CD14-positive monocyte (primary cell): ENCODE measurements at regions of chr3 and their contacts with region 1.

Region 1: GRCh38 chr3:183188895-183189462 is 26.4 kb upstream of the LAMP3 start:
- DNase-seq: peak; percentile 36 to 47 (median 44)
- H3K4me3 ChIP-seq: no peak overlapping the region
- H3K4me3 Mint-ChIP-seq: no peak overlapping the region
- H3K27ac ChIP-seq: no peak overlapping the region
- H3K27ac Mint-ChIP-seq: peak overlapping the region in 2 of 7 donors; percentile 50 to 75
- H3K4me1 ChIP-seq: peaks cover 20 to 26% of the 10 kb centered on the region in 2 donors
- H3K4me1 Mint-ChIP-seq: peaks cover 21% of the 10 kb centered on the region
- H3K27me3 ChIP-seq: no peaks in the 10 kb centered on the region
- H3K27me3 Mint-ChIP-seq: peaks cover 0 to 6% (median 0%) of the 10 kb centered on the region in 3 donors
- CTCF ChIP-seq: peak; percentile 39

Region 2: DNA sequence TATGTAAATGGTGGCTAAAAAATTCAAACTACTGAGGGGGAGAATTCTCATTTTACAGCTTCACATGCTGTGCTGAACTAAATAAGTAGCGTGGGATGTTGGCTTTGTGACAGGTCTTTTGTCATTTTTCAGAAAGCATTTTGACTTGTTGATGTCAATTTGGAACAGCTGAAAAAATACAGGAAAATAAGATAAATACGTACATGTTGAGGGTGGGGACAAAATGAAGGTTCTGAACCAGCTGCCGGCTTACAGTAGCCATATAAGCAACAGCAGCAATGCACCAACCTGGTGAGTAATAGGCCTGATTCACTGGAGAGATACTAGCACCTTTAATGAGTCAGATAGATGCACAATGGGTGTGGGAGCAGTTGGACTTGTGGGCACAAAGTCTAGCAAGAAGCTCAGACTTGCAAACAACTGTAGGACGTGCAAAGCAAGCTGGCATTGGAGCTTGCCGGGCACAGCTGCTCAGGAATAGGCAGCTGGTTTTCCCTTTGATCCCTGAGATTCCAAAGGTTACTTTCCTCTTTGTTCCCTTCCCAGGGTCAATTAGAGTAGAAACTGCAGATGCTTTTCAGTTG is 76.9 kb after region 1 on chr3:
- intact Hi-C with region 1: loop called in 1 of 2 experiments (anchors 5 kb)
- DNase-seq: peak; percentile 49 to 80 (median 58)
- H3K4me3 ChIP-seq: no peak overlapping the region
- H3K4me3 Mint-ChIP-seq: no peak overlapping the region
- H3K27ac ChIP-seq: peak overlapping the region in 1 of 2 donors; percentile 29
- H3K27ac Mint-ChIP-seq: no peak overlapping the region
- H3K4me1 ChIP-seq: peaks cover 31 to 46% of the 10 kb centered on the region in 2 donors
- H3K4me1 Mint-ChIP-seq: peaks cover 22% of the 10 kb centered on the region
- H3K27me3 ChIP-seq: no peaks in the 10 kb centered on the region
- H3K27me3 Mint-ChIP-seq: no peaks in the 10 kb centered on the region
- CTCF ChIP-seq: no peak

Region 3: DNA sequence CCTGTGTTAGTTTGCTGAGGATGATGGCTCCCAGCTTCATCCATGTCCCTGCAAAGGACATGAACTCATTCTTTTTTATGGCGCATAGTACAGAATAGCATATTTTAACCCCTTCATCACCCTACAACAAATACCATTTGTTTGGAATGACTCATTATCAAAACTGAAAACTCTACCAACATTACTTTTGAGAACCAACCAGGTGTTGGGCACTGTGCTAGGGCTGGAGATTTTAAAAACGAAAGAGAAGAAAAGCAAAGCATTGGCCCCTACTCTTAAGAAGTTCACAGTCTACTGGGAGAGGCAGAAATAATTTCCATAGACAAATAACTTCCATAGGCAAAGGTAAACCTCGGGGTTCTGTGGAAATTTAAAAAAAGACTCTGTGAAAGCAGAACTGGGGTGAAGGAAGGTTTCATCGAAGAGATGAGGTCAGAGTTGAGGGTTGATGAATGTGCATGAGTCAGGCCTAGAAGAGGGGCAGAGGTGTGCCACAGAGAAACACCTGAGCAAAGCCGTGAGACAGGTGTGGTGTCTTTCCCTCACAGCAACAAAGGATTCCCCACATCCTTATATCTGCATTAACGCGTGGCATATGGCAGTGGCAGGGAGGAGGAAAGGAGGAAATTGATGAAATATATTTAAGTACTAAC is 188.5 kb after region 1 on chr3:
- intact Hi-C with region 1: loop called (anchors 2 kb)
- DNase-seq: peak in 2 of 3 donors; percentile 45 to 51
- H3K4me3 ChIP-seq: no peak overlapping the region
- H3K4me3 Mint-ChIP-seq: no peak overlapping the region
- H3K27ac ChIP-seq: no peak overlapping the region
- H3K27ac Mint-ChIP-seq: peak overlapping the region in 5 of 7 donors; percentile 23 to 51 (median 33)
- H3K4me1 ChIP-seq: peaks cover 52 to 74% of the 10 kb centered on the region in 2 donors
- H3K4me1 Mint-ChIP-seq: peaks cover 66% of the 10 kb centered on the region
- H3K27me3 ChIP-seq: no peaks in the 10 kb centered on the region
- H3K27me3 Mint-ChIP-seq: peaks cover 0 to 3% (median 2%) of the 10 kb centered on the region in 3 donors
- CTCF ChIP-seq: no peak